CD4-positive, alpha-beta memory T cell (primary cell): ENCODE measurements at regions of chr12 and their contacts with region 1.

Region 1: GRCh38 chr12:14185427-14186192 is 179.9 kb upstream of the ATF7IP start:
- DNase-seq: peak in 4 of 5 donors; percentile 15 to 27 (median 24)
- H3K4me3 ChIP-seq: no peak overlapping the region
- H3K4me3 Mint-ChIP-seq: peak overlapping the region in 1 of 8 donors; percentile 32
- H3K27ac ChIP-seq: no peak overlapping the region
- H3K27ac Mint-ChIP-seq: no peak overlapping the region
- H3K4me1 ChIP-seq: no peaks in the 10 kb centered on the region
- H3K4me1 Mint-ChIP-seq: peaks cover 0 to 2% (median 0%) of the 10 kb centered on the region in 4 donors
- H3K27me3 ChIP-seq: no peaks in the 10 kb centered on the region
- H3K27me3 Mint-ChIP-seq: peaks cover 5 to 6% of the 10 kb centered on the region in 2 donors

Region 2: DNA sequence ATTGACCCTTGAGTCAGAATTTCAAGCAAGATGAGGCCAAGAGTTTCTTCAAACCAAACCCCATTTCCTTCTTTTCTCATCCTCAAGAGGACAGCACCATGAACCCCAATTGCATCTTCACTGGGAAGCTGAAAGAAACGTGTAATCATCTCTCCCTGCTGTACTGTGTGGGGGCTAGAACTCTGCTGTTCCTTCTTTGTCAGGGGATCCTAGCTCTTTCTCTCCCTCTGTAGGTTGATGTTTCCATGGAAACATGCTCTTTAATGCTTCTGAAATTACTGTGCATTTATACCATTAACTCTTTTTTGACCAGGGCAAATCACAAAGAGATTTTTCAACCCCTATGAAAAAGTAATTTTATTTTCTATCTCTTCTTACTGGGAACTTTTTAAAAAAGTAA is 499.4 kb before region 1 on chr12:
- CTCF ChIA-PET with region 1: no interaction called
- POLR2A ChIA-PET with region 1: no interaction called
- intact Hi-C with region 1: no loop called
- DNase-seq: no peak
- H3K4me3 ChIP-seq: no peak overlapping the region
- H3K4me3 Mint-ChIP-seq: no peak overlapping the region
- H3K27ac ChIP-seq: no peak overlapping the region
- H3K27ac Mint-ChIP-seq: no peak overlapping the region
- H3K4me1 ChIP-seq: no peaks in the 10 kb centered on the region
- H3K4me1 Mint-ChIP-seq: no peaks in the 10 kb centered on the region
- H3K27me3 ChIP-seq: no peaks in the 10 kb centered on the region
- H3K27me3 Mint-ChIP-seq: peaks cover 2 to 5% of the 10 kb centered on the region in 2 donors

Region 3: DNA sequence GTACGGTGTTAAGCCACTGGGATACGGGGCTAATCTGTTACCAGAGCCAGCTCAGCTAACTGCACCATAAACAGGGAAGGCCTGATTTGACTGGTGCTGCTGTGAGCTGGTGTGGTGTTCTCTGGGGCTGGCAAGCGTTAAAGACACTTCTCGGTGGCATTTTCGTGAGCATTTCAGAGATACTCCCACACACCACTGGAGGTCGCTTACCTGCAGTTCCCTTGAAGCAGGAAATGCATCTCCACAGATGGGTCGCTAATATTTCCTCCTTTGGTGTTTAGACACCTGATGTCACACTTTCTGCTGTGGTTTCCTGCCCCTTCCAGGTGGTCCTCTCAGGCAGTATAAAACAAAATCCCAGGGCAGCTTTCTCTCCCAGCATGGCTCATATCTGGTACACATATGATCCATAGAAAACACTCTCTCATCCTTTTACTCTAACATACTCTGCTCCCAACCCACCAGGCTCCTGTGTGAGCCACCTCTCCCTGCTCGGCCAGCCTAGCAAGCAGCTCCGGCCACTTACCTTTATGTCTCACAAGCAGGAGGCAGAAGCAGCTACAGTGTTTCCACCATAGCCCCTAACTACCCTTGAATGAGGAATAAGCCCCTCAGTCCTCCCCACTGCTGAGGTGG is 74.3 kb before region 1 on chr12:
- CTCF ChIA-PET with region 1: no interaction called
- POLR2A ChIA-PET with region 1: no interaction called
- intact Hi-C with region 1: no loop called
- DNase-seq: no peak
- H3K4me3 ChIP-seq: no peak overlapping the region
- H3K4me3 Mint-ChIP-seq: no peak overlapping the region
- H3K27ac ChIP-seq: no peak overlapping the region
- H3K27ac Mint-ChIP-seq: no peak overlapping the region
- H3K4me1 ChIP-seq: no peaks in the 10 kb centered on the region
- H3K4me1 Mint-ChIP-seq: no peaks in the 10 kb centered on the region
- H3K27me3 ChIP-seq: no peaks in the 10 kb centered on the region
- H3K27me3 Mint-ChIP-seq: peaks cover 10 to 11% of the 10 kb centered on the region in 2 donors

Region 4: GRCh38 chr12:14157088-14157747 is 28.4 kb before region 1 on chr12:
- CTCF ChIA-PET with region 1: no interaction called
- POLR2A ChIA-PET with region 1: no interaction called
- intact Hi-C with region 1: no loop called
- DNase-seq: no peak
- H3K4me3 ChIP-seq: no peak overlapping the region
- H3K4me3 Mint-ChIP-seq: no peak overlapping the region
- H3K27ac ChIP-seq: no peak overlapping the region
- H3K27ac Mint-ChIP-seq: no peak overlapping the region
- H3K4me1 ChIP-seq: no peaks in the 10 kb centered on the region
- H3K4me1 Mint-ChIP-seq: no peaks in the 10 kb centered on the region
- H3K27me3 ChIP-seq: no peaks in the 10 kb centered on the region
- H3K27me3 Mint-ChIP-seq: peaks cover 0 to 16% of the 10 kb centered on the region in 2 donors

Region 5: DNA sequence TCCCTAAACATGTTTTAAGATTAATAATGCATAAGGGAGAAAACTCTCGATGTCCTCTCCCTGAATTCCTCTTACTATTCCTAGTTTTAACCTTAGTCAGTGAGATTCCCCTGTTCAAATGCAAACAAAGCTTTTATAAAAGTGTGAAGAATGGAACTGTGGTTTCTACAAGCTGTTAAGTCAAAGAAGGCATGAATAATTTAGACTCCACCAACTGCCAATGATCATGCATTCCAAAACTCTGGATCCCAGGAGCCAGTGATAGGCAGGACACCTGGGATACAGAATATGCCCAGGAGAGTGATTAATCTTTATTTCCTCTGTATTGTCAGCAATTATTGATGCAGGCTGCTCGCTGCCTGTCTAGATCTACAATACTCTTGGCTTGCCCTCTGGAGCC is 10.4 kb before region 1 on chr12:
- CTCF ChIA-PET with region 1: interaction called, 10 read pairs
- POLR2A ChIA-PET with region 1: no interaction called
- intact Hi-C with region 1: no loop called
- DNase-seq: no peak
- H3K4me3 ChIP-seq: no peak overlapping the region
- H3K4me3 Mint-ChIP-seq: no peak overlapping the region
- H3K27ac ChIP-seq: no peak overlapping the region
- H3K27ac Mint-ChIP-seq: no peak overlapping the region
- H3K4me1 ChIP-seq: no peaks in the 10 kb centered on the region
- H3K4me1 Mint-ChIP-seq: no peaks in the 10 kb centered on the region
- H3K27me3 ChIP-seq: no peaks in the 10 kb centered on the region
- H3K27me3 Mint-ChIP-seq: peaks cover 4 to 5% of the 10 kb centered on the region in 2 donors

Region 6: GRCh38 chr12:14664510-14664909 is 478.9 kb after region 1 on chr12:
- CTCF ChIA-PET with region 1: interaction called, 3 read pairs
- POLR2A ChIA-PET with region 1: no interaction called
- intact Hi-C with region 1: loop called (anchors 1 kb)
- DNase-seq: peak; percentile 47 to 57 (median 51)
- H3K4me3 ChIP-seq: no peak overlapping the region
- H3K4me3 Mint-ChIP-seq: no peak overlapping the region
- H3K27ac ChIP-seq: no peak overlapping the region
- H3K27ac Mint-ChIP-seq: no peak overlapping the region
- H3K4me1 ChIP-seq: no peaks in the 10 kb centered on the region
- H3K4me1 Mint-ChIP-seq: peaks cover 0 to 5% (median 3%) of the 10 kb centered on the region in 4 donors
- H3K27me3 ChIP-seq: no peaks in the 10 kb centered on the region
- H3K27me3 Mint-ChIP-seq: peaks cover 2 to 4% of the 10 kb centered on the region in 2 donors